HEK293T (cell line): ENCODE measurements at regions of chr3 and their contacts with region 1.

Region 1: GRCh38 chr3:128623762-128624176 is 26.8 kb downstream of the RPN1 start:
- DNase-seq: no peak

Region 2: DNA sequence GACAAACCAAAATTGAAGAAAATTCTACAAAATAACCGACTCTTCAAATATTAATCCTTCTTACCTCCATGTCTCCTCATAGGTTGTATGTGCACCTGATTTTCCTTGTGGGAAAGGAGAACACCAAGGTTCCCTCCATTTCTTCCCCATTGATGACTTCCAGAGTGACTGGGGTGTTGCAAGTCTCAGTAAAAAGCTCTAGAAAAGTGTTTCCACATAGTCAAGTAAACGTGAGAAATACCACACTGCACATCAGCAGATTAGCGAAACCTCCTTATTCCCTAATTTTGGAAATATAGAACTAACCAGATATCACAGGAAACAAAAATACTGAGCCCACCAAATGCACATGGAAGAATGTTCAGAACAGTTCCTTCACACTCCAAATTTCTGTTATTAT is 31.8 kb after region 1 on chr3:
- CTCF ChIA-PET with region 1: interaction called, 10 read pairs
- POLR2A ChIA-PET with region 1: interaction called, 5 read pairs
- DNase-seq: no peak